Naive thymus-derived CD4-positive, alpha-beta T cell (primary cell): ENCODE measurements at regions of chr5 and their contacts with region 1.

Region 1: GRCh38 chr5:109767997-109768396 is 78.3 kb downstream of the MAN2A1 start:
- DNase-seq: no peak
- ATAC-seq: no peak
- H3K4me3 ChIP-seq: no peak overlapping the region
- H3K4me3 Mint-ChIP-seq: no peak overlapping the region
- H3K27ac ChIP-seq: no peak overlapping the region
- H3K27ac Mint-ChIP-seq: peak overlapping the region in 2 of 9 donors; percentile 7 to 37
- H3K4me1 ChIP-seq: no peaks in the 10 kb centered on the region
- H3K4me1 Mint-ChIP-seq: peaks cover 0 to 33% (median 23%) of the 10 kb centered on the region in 7 donors
- H3K27me3 ChIP-seq: no peaks in the 10 kb centered on the region
- H3K27me3 Mint-ChIP-seq: no peaks in the 10 kb centered on the region

Region 2: DNA sequence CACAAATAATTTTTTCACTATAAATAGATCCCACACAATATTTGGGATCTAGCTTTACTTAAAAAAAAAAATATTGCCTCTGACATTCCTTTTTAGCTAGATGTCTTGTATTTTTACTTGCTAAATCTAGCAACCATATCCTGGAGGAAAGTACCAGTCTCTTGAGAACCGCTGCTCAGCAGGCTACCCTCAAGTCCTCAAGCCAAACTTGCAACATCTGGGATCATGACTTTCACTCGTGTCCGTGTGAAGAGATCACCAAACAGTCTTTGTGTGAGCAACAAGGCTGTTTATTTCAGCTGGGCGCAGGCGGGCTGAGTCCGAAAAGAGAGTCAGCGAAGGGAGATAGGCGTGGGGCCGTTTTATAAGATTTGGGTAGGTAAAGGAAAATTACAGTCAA is 1200.6 kb before region 1 on chr5:
- CTCF ChIA-PET with region 1: no interaction called
- POLR2A ChIA-PET with region 1: no interaction called
- intact Hi-C with region 1: no loop called
- DNase-seq: no peak
- ATAC-seq: no peak
- H3K4me3 ChIP-seq: no peak overlapping the region
- H3K4me3 Mint-ChIP-seq: no peak overlapping the region
- H3K27ac ChIP-seq: no peak overlapping the region
- H3K27ac Mint-ChIP-seq: no peak overlapping the region
- H3K4me1 ChIP-seq: no peaks in the 10 kb centered on the region
- H3K4me1 Mint-ChIP-seq: no peaks in the 10 kb centered on the region
- H3K27me3 ChIP-seq: no peaks in the 10 kb centered on the region
- H3K27me3 Mint-ChIP-seq: peaks cover 0 to 7% (median 2%) of the 10 kb centered on the region in 5 donors

Region 3: DNA sequence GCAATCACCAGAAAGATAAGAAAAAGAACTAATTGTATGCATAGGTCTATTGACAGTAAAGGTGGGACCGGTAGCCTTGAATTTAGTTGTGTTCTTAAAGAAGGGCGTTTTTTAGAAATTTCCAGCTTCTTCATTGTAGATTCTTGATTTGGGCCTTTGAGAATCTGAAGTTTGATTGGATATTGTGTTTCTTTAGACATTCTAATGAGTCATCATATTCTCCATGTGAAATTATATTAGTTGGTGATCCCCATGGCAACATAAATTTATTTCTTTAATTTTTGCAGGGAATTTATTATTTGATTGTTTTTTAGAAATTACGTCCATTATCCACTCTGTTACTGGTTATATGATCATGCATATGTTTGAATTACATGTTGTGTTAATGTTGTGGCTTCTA is 14.7 kb before region 1 on chr5:
- CTCF ChIA-PET with region 1: no interaction called
- POLR2A ChIA-PET with region 1: no interaction called
- intact Hi-C with region 1: loop called in 1 of 2 experiments (anchors 2 kb)
- DNase-seq: no peak
- ATAC-seq: no peak
- H3K4me3 ChIP-seq: no peak overlapping the region
- H3K4me3 Mint-ChIP-seq: no peak overlapping the region
- H3K27ac ChIP-seq: no peak overlapping the region
- H3K27ac Mint-ChIP-seq: peak overlapping the region in 4 of 9 donors; percentile 7 to 60 (median 23)
- H3K4me1 ChIP-seq: peaks cover 0 to 6% of the 10 kb centered on the region in 2 donors
- H3K4me1 Mint-ChIP-seq: peaks cover 0 to 73% (median 58%) of the 10 kb centered on the region in 7 donors
- H3K27me3 ChIP-seq: no peaks in the 10 kb centered on the region
- H3K27me3 Mint-ChIP-seq: no peaks in the 10 kb centered on the region

Region 4: GRCh38 chr5:109788596-109788995 is 20.6 kb after region 1 on chr5:
- CTCF ChIA-PET with region 1: interaction called, 3 read pairs
- POLR2A ChIA-PET with region 1: no interaction called
- intact Hi-C with region 1: loop called in 1 of 2 experiments (anchors 2 kb)
- DNase-seq: no peak
- ATAC-seq: no peak
- H3K4me3 ChIP-seq: no peak overlapping the region
- H3K4me3 Mint-ChIP-seq: no peak overlapping the region
- H3K27ac ChIP-seq: no peak overlapping the region
- H3K27ac Mint-ChIP-seq: peak overlapping the region in 3 of 9 donors; percentile 3 to 54 (median 9)
- H3K4me1 ChIP-seq: no peaks in the 10 kb centered on the region
- H3K4me1 Mint-ChIP-seq: peaks cover 3 to 29% (median 6%) of the 10 kb centered on the region in 7 donors
- H3K27me3 ChIP-seq: no peaks in the 10 kb centered on the region
- H3K27me3 Mint-ChIP-seq: no peaks in the 10 kb centered on the region

Region 5: DNA sequence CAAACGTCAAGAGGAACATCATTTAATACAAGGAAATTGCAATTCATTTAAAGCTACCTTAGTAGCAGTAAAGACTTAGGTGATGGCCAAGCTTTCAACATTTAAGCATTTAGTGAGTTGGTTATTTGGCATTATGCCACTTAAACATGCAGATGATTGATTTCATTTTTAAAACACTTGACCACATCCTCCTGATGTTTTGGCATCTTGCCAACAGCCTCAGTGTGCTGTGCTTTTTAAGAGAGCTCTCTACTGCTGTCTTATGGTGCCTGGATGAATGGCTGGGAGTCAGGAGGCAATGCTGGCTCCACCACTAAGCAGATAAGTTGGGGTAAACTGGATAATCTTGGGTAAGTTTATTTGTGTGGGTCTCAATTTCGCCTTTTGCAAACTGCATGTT is 286.2 kb after region 1 on chr5:
- CTCF ChIA-PET with region 1: no interaction called
- POLR2A ChIA-PET with region 1: no interaction called
- intact Hi-C with region 1: no loop called
- DNase-seq: peak; percentile 17 to 93 (median 85)
- ATAC-seq: peak; percentile 89
- H3K4me3 ChIP-seq: peak overlapping the region; percentile 6
- H3K4me3 Mint-ChIP-seq: peak overlapping the region; percentile 50 to 86 (median 65)
- H3K27ac ChIP-seq: peak overlapping the region; percentile 63
- H3K27ac Mint-ChIP-seq: peak overlapping the region; percentile 77 to 96 (median 90)
- H3K4me1 ChIP-seq: peaks cover 21 to 35% of the 10 kb centered on the region in 2 donors
- H3K4me1 Mint-ChIP-seq: peaks cover 10 to 50% (median 35%) of the 10 kb centered on the region in 7 donors
- H3K27me3 ChIP-seq: no peaks in the 10 kb centered on the region
- H3K27me3 Mint-ChIP-seq: no peaks in the 10 kb centered on the region